Dorsolateral prefrontal cortex (tissue), 120 donors: ENCODE measurements at regions of chr7 and their contacts with region 1.

Region 1: GRCh38 chr7:149147072-149147751 is at the start of gene ZNF398:
- DNase-seq: peak; percentile 51 to 82 (median 71)
- H3K4me3 ChIP-seq: peak within 1 kb of the TSS; percentile 64 to 97 (median 85)
- H3K27ac ChIP-seq: peak within 1 kb of the TSS; percentile 62 to 95 (median 89)
- H3K27me3 ChIP-seq: no peaks in the 10 kb centered on the region
- CTCF ChIP-seq: peak; percentile 24 to 98 (median 70)
- total RNA-seq, gene ZNF398: 16.7 to 30.3 (median 24.1) TPM

Region 2: DNA sequence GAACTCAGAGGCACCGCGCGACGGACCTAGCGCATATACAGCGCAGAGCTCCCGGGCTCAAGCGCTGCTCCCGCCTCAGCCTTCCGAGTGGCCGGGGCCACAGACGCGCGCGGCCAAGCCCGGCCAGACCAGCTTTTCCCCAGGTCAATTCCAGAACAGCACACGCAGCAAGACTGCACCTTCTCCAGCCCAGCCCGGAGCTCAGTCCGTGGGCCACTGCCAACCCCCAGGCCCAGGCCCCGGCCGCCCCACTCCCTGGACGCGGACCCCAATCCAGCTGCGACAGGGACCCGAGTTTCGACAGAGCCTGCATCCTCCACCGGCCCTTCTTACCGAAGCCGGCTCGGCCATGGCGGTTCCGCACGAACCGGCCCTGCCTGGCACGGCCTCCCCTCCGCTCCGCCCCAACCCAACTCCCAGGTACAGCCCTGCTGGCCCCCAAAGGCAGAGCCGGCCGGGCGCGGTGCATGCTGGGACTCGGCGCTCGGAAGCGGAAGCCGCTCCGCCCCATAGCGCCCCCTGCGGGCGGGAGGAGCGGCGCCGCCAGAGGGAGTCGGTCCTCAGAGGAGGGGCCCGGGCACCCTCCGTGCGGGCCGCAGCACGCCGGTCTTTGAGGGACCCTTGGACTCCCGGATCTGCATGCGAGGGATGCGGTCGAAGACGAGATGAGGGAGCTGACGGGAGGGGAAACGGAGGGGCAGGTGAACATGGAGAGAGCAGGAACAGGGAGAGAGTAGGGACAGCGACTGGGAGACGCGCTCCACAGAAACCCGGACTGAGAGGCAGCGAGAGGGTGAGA is 21.1 kb before region 1 on chr7 and contains the start of gene ZNF425:
- intact Hi-C with region 1: loop called (anchors 1 kb)
- DNase-seq: peak; percentile 64 to 94 (median 83)
- H3K4me3 ChIP-seq: peak within 1 kb of the TSS; percentile 69 to 100 (median 94)
- H3K27ac ChIP-seq: peak within 1 kb of the TSS; percentile 53 to 99 (median 96)
- H3K27me3 ChIP-seq: no peaks in the 10 kb centered on the region
- CTCF ChIP-seq: peak; percentile 73 to 99 (median 94)
- total RNA-seq, gene ZNF425: 3.9 to 11.4 (median 6.6) TPM

Region 3: GRCh38 chr7:149195180-149196150 is 48.3 kb after region 1 on chr7 and contains the start of gene ZNF282:
- intact Hi-C with region 1: loop called (anchors 2 to 10 kb)
- DNase-seq: peak; percentile 74 to 94 (median 92)
- H3K4me3 ChIP-seq: peak within 1 kb of the TSS; percentile 58 to 91 (median 81)
- H3K27ac ChIP-seq: peak within 1 kb of the TSS; percentile 58 to 96 (median 91)
- H3K27me3 ChIP-seq: no peaks in the 10 kb centered on the region
- CTCF ChIP-seq: peak; percentile 28 to 80 (median 64)
- total RNA-seq, gene ZNF282: 14.8 to 29.7 (median 20.7) TPM